SK-N-SH (cell line): ENCODE measurements at regions of chr15 and their contacts with region 1.

Region 1: DNA sequence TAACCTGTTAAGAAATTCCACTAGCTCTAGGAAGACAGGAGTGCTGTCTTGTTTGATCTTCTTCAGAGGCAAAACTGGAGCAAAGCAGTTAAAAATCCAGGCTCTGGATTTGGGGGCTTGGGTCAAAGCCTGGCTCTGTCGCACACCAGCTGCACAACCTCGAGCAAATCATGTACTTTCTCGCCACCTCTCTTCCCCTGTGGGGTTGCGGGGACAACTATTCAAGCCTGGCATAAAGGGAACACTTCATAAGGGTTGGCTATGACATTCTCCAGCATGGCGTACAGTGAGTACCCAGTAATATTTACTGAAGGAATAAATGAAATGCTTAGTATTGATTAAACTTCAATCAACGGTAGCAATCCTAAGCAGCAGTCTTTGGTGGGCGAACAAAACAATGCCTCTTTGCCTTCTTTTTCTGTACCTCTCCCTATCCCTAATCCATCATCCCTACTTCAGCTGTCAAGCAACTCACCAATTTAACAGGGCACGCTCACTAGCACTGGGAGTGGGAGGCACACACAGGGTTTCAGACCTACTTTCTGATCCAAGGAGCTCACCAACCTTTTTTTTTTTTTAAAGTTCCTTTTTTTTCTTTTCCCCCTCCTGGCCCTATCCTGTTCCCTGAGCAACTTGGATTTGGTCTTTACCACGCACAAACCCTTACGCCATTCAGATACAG is 33.0 kb downstream of the GNB5 start:
- DNase-seq: no peak
- H3K4me3 ChIP-seq: no peak overlapping the region
- H3K27ac ChIP-seq: no peak overlapping the region
- H3K4me1 ChIP-seq: no peaks in the 10 kb centered on the region
- H3K27me3 ChIP-seq: no peaks in the 10 kb centered on the region
- CTCF ChIP-seq: no peak
- EP300 ChIP-seq: no peak
- RAD21 ChIP-seq: no peak

Region 2: GRCh38 chr15:52139599-52140491 is 18.4 kb before region 1 on chr15:
- CTCF ChIA-PET with region 1: interaction called, 14 read pairs
- POLR2A ChIA-PET with region 1: no interaction called
- DNase-seq: peak; percentile 74
- H3K4me3 ChIP-seq: no peak overlapping the region; a peak in 1 of 4 replicates
- H3K27ac ChIP-seq: peak overlapping the region in 1 of 2 experiments; percentile 28; a peak in 1 of 4 replicates
- H3K4me1 ChIP-seq: peaks cover 24 to 27% of the 10 kb centered on the region in 2 experiments
- H3K27me3 ChIP-seq: no peaks in the 10 kb centered on the region
- CTCF ChIP-seq: peak; percentile 89
- EP300 ChIP-seq: no peak
- RAD21 ChIP-seq: peak; percentile 76